ENCODE measurements at regions of chr16 and their contacts with region 1.

Region 1: GRCh38 chr16:4402439-4403132 is 13.8 kb downstream of the CORO7 start:
- DNase-seq: peak; percentile 66 to 98 (median 86)
- ATAC-seq: peak; percentile 90 to 97 (median 96)
- H3K4me3 ChIP-seq: no peak overlapping the region
- H3K27ac ChIP-seq: no peak overlapping the region
- H3K4me1 ChIP-seq: no peaks in the 10 kb centered on the region
- H3K27me3 ChIP-seq: no peaks in the 10 kb centered on the region
- CTCF ChIP-seq: peak; percentile 84 to 92 (median 90)

Region 2: GRCh38 chr16:4200000-4200780 is 202.4 kb before region 1 on chr16:
- intact Hi-C with region 1: loop called in 2 of 3 experiments (anchors 10 kb)
- DNase-seq: peak; percentile 60 to 88 (median 77)
- ATAC-seq: peak; percentile 87 to 100 (median 98)
- H3K4me3 ChIP-seq: no peak overlapping the region
- H3K27ac ChIP-seq: no peak overlapping the region
- H3K4me1 ChIP-seq: peaks cover 0 to 3% (median 0%) of the 10 kb centered on the region in 3 donors
- H3K27me3 ChIP-seq: no peaks in the 10 kb centered on the region
- CTCF ChIP-seq: peak; percentile 16 to 66 (median 54)

Region 3: GRCh38 chr16:4288148-4288921 is 114.3 kb before region 1 on chr16:
- intact Hi-C with region 1: loop called in 2 of 3 experiments (anchors 10 kb)
- DNase-seq: peak; percentile 62 to 95 (median 80)
- ATAC-seq: peak; percentile 86 to 96 (median 92)
- H3K4me3 ChIP-seq: no peak overlapping the region
- H3K27ac ChIP-seq: no peak overlapping the region
- H3K4me1 ChIP-seq: peaks cover 0 to 3% (median 0%) of the 10 kb centered on the region in 3 donors
- H3K27me3 ChIP-seq: no peaks in the 10 kb centered on the region
- CTCF ChIP-seq: peak; percentile 85 to 94 (median 90)

Region 4: GRCh38 chr16:4330277-4330874 is 72.2 kb before region 1 on chr16:
- intact Hi-C with region 1: no loop called
- DNase-seq: peak; percentile 69 to 96 (median 86)
- ATAC-seq: peak; percentile 65 to 79 (median 76)
- H3K4me3 ChIP-seq: no peak overlapping the region
- H3K27ac ChIP-seq: no peak overlapping the region
- H3K4me1 ChIP-seq: peaks cover 0 to 14% (median 6%) of the 10 kb centered on the region in 3 donors
- H3K27me3 ChIP-seq: no peaks in the 10 kb centered on the region
- CTCF ChIP-seq: peak; percentile 84 to 97 (median 92)

Region 5: GRCh38 chr16:4358831-4359561 is 43.6 kb before region 1 on chr16:
- intact Hi-C with region 1: loop called in 2 of 3 experiments (anchors 2 to 5 kb)
- DNase-seq: peak in 4 of 6 donors; percentile 69 to 89 (median 82)
- ATAC-seq: peak; percentile 59 to 86 (median 85)
- H3K4me3 ChIP-seq: no peak overlapping the region
- H3K27ac ChIP-seq: no peak overlapping the region
- H3K4me1 ChIP-seq: no peaks in the 10 kb centered on the region
- H3K27me3 ChIP-seq: no peaks in the 10 kb centered on the region
- CTCF ChIP-seq: peak; percentile 86 to 95 (median 94)

Region 6: DNA sequence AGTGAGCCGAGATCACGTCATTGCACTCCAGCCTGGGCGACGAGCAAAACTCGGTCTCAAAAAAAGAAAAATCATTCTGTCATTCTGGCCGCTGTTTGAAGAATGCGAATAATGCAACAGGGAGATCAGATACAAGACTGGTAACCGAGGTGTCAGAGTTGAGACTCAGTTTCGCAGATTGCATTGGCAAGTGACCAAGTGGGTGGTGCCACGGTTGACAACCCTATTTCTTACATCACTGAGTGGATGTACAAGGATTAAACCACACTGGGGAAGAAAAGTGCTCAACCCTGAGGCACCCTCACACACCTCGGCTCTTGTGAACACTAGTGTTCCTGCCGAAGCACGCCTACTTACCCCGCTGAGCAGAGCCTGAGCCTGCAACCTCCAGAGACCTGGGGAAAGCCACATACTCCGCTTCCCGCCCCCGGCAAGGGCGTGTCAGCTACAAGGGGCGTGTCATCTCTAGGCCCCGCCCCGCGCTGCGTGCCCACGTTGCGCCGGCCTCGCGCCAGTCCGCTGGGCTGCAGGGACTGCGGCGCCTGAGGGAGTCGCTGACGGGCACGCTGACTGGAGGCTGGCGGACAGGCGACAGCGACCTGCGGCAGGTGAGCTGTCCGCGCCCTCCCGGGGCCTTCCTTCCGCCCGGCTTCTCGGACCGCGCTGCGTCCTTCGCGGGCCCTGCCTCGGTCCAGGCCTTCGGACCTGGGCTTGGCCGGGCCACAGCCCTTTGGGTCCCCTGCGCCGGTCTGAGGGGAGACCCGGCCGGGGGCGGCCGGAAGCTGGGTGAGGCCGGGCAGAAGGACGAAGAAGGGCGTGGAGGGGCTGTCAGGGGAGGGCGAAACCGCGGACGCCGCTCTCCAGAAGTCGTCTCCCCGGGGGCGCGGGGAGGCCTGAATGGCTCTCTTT is 73.5 kb after region 1 on chr16 and contains the start of gene HMOX2:
- intact Hi-C with region 1: no loop called
- DNase-seq: peak; percentile 90 to 99 (median 98)
- ATAC-seq: peak; percentile 92 to 96 (median 93)
- H3K4me3 ChIP-seq: peak within 1 kb of the TSS; percentile 74 to 99 (median 88)
- H3K27ac ChIP-seq: peak within 1 kb of the TSS; percentile 82 to 91 (median 84)
- H3K4me1 ChIP-seq: peaks cover 0 to 8% (median 0%) of the 10 kb centered on the region in 3 donors
- H3K27me3 ChIP-seq: no peaks in the 10 kb centered on the region
- CTCF ChIP-seq: peak in 1 of 4 donors; percentile 33
- total RNA-seq, gene HMOX2: 12.8 to 22.0 (median 18.5) TPM

Region 7: GRCh38 chr16:4561596-4561995 is 159.0 kb after region 1 on chr16:
- intact Hi-C with region 1: no loop called
- DNase-seq: no peak
- ATAC-seq: no peak
- H3K4me3 ChIP-seq: no peak overlapping the region
- H3K27ac ChIP-seq: no peak overlapping the region
- H3K4me1 ChIP-seq: no peaks in the 10 kb centered on the region
- H3K27me3 ChIP-seq: no peaks in the 10 kb centered on the region
- CTCF ChIP-seq: no peak

Measured in pancreas (tissue), 10 donors.